ENCODE measurements at regions of chr1 and their contacts with region 1.

Region 1: GRCh38 chr1:36150296-36151132 is 1.2 kb upstream of the TRAPPC3 start:
- ATAC-seq: peak; percentile 52 to 71 (median 64)
- H3K4me3 ChIP-seq: peak overlapping the region in 3 of 5 donors; percentile 5 to 11 (median 7)
- H3K27ac ChIP-seq: peak overlapping the region; percentile 84 to 90
- H3K4me1 ChIP-seq: peaks cover 31 to 34% of the 10 kb centered on the region in 2 donors

Region 2: GRCh38 chr1:36285448-36286101 is 135.1 kb after region 1 on chr1:
- in situ Hi-C with region 1: loop called in 2 of 9 experiments (anchors 25 kb)
- ATAC-seq: peak; percentile 54 to 96 (median 70)
- H3K4me3 ChIP-seq: no peak overlapping the region
- H3K27ac ChIP-seq: no peak overlapping the region
- H3K4me1 ChIP-seq: no peaks in the 10 kb centered on the region

Region 3: DNA sequence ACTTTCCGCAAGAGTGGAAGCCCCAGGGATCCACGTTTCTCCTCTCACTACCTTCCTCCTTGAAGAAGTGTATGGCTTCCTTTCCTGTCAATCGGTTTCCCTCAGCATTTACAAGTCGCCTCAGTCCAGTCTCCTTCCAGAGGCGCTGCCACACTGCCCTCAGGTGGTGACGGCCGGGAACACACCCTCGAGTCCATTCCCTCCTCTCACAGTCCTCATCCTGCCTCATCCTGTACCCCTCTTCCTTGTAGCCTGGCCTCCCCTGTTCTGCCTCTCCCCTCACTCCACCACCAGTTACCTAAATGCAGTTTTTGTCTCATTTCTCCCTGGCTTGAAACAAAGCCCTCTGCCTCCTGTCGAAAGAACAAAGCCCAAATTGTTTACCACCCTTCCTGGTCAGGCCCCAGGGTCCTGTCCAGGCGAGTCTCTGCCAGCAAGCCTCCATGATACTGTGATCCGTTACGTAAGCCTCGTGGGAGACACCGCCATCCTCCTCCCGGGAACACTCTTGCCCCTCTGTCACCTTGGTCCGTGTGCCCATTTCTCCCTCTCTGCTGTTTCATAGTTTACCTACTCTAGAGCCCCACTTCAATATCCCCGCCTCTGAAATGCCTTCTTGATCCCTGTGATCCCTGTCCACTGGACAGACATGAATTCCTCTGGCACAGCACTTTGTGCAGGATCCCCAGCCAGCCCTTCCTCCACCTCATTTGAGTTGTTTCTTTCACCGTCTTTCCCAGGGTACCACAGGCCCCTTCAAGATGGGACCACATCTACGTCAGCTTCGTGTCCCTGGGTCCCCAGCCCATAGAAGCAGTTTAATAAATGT is 270.5 kb after region 1 on chr1:
- in situ Hi-C with region 1: loop called in 1 of 9 experiments (anchors 25 kb)
- ATAC-seq: peak; percentile 88 to 100 (median 96)
- H3K4me3 ChIP-seq: no peak overlapping the region
- H3K27ac ChIP-seq: no peak overlapping the region
- H3K4me1 ChIP-seq: peaks cover 6 to 12% of the 10 kb centered on the region in 2 donors